Posterior vena cava (tissue), 2 donors: ENCODE measurements at regions of chr5 and their contacts with region 1.

Region 1: GRCh38 chr5:56838409-56839039 is 23.2 kb downstream of the MAP3K1 start:
- DNase-seq: no peak

Region 2: DNA sequence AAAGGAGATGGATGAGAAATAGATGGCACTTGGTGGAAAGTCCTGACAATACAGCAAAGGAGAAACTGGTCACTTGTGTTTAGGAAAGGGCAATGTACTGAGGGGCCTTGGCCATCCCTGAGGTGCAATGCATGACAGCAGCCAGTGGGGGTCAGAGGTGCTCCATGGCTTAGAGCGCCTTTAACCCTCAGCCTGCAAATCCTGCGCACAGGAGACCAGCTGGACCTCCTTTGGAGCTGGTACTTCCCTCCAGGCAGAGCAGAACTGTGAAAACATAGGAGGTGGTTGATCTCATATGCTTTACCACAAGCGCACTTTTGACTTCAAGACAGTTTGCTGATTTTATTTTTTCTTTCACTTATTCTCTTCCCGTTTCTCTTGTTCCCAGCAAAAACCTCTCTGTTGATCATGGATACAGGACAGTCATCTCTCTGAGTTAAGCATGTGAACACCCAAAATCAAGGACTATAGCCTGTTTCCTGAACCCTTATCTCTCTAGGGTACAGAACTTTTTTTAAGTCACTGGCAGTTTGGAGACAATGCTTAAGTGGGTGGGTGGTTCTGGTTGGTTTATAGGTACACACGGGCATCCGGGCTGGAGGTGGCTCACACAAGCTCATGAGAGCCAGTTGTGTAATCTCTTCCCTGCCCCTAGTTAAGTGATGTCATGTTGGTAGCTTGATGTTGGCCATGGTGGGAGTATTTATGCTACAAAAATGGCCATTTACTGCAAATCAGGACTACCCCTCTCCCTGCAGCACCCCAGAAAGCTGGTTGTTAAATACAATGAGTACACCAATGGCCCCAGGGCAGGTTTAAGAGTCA is 567.7 kb before region 1 on chr5:
- intact Hi-C with region 1: loop called (anchors 5 kb)
- DNase-seq: peak; percentile 93

Region 3: GRCh38 chr5:56725711-56726411 is 112.7 kb before region 1 on chr5:
- intact Hi-C with region 1: no loop called
- DNase-seq: no peak